ENCODE measurements at regions of chr22 and their contacts with region 1.

Region 1: GRCh38 chr22:41832553-41833368 is at the start of gene SREBF2:
- DNase-seq: peak; percentile 100
- H3K4me3 Mint-ChIP-seq: peak within 1 kb of the TSS; percentile 92
- H3K27ac Mint-ChIP-seq: peak within 1 kb of the TSS; percentile 96
- H3K4me1 Mint-ChIP-seq: peaks cover 50% of the 10 kb centered on the region
- H3K27me3 Mint-ChIP-seq: no peaks in the 10 kb centered on the region
- total RNA-seq, gene SREBF2: 150 to 157 TPM

Region 2: DNA sequence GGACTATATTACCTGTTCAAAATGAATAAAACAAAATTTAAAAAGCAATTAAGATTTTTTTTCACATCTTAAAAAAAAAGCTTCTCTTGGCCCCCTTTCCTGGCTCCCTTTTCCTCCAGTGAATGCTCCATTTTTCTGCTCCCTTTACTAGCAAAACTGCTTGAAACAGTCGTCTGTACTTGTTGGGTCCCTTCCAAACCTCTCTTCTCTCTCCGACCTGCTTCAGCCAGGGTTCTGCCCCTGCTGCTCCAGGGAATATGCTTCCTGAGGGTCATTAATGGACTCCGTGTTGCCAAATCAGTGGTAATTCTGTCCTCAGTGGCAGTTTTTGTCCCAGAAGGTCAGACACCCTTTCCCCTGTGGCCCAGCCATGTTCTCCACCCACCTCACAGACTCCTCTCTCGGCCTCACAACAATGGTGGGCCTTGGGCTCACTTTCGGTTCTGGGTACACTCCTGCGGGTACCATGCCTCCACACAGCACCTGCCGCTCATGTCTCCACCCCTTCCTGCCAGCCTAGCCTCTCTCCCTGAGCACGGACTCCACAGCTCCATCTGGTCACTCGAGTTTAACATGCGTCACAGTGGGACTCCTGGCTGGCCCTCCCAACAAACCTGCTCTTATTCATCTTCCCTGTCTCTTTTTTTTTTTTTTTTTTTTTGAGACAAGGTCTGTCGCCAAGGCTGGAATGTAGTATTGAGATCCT is 280.7 kb before region 1 on chr22:
- CTCF ChIA-PET with region 1: no interaction called
- POLR2A ChIA-PET with region 1: no interaction called
- DNase-seq: no peak
- H3K4me3 Mint-ChIP-seq: no peak overlapping the region
- H3K27ac Mint-ChIP-seq: no peak overlapping the region
- H3K4me1 Mint-ChIP-seq: peaks cover 2% of the 10 kb centered on the region
- H3K27me3 Mint-ChIP-seq: peaks cover 22% of the 10 kb centered on the region

Region 3: DNA sequence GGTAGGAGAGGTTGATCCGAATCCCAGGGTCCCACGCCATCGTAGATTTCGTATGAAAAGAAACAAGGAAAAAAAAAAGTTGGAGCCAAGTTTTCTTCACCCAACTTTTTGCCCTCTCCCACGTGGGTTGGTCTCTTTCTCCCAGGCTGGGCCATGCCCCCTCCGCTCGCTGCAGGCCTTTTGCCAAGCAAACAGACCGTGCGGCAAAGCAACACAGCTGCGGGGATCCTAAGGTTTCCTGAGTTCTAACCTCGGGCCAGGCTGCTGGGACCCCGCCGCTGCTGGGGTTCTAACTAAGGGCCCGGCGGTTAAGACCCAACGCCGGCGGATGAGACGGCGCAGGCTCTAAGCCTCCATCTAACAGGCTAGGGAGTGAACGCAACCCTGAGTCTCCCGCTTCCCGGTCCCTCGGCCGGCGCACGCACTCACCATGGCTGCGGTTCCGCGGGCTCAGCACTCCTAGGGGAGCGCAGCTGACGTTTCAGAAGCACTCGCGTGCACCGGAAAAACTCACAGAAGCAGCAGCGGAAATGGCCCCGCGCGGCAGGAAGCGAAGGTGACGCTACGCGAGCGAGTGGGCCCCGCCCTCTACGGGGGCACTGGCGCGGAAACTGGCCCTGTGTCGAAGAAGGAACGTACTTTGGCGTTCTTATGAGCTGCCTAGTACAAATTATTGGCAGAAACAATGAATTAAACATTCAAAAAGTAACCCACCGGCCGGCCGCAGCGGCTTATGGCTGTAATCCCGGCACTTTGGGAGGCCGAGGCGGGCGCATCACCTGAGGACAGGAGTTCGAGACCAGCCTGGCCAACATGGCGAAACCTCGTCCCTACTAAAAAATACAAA is 144.2 kb before region 1 on chr22 and contains the start of gene SNU13:
- CTCF ChIA-PET with region 1: no interaction called
- POLR2A ChIA-PET with region 1: interaction called, 21 read pairs
- DNase-seq: peak; percentile 95
- H3K4me3 Mint-ChIP-seq: peak within 1 kb of the TSS; percentile 95
- H3K27ac Mint-ChIP-seq: peak within 1 kb of the TSS; percentile 92
- H3K4me1 Mint-ChIP-seq: peaks cover 40% of the 10 kb centered on the region
- H3K27me3 Mint-ChIP-seq: no peaks in the 10 kb centered on the region
- total RNA-seq, gene SNU13: 166 to 176 TPM

Region 4: DNA sequence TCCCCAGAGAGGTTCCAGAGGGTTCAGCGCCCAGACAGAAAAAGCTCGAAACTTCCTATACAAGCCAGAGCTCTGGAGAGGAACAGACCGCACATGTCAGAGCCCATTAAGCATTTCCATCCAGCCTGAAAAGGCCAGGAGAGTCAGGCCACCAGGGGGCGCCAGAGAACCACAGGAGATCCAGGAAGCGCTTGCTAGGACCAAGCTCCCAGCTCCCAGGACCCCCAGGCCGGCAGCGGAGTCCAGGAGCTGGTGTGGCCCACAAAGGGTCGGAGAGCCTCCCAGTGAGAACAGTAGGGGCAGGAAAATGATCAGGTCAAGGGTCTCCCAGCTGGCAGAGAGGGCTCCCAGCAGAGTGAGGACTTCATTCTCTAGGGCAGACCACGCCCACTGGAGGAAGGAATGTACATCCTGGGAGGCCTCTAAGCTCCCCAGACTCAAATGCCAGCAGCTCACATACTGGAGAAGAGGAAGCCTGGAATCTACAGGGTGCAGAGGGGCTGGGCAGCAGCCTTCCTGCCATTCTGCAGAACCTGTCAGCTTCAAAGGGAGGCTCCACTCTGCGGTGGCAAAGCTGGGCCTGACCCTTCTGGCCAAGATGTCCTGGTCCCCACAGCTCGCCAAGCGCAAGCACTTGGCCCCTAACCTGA is 135.5 kb before region 1 on chr22:
- CTCF ChIA-PET with region 1: interaction called, 11 read pairs
- POLR2A ChIA-PET with region 1: interaction called, 10 read pairs
- DNase-seq: peak; percentile 91
- H3K4me3 Mint-ChIP-seq: no peak overlapping the region
- H3K27ac Mint-ChIP-seq: peak overlapping the region; percentile 68
- H3K4me1 Mint-ChIP-seq: peaks cover 18% of the 10 kb centered on the region
- H3K27me3 Mint-ChIP-seq: peaks cover 4% of the 10 kb centered on the region

Region 5: GRCh38 chr22:41780746-41781505 is 51.8 kb before region 1 on chr22:
- CTCF ChIA-PET with region 1: interaction called, 4 read pairs
- POLR2A ChIA-PET with region 1: interaction called, 66 read pairs
- DNase-seq: peak; percentile 96
- H3K4me3 Mint-ChIP-seq: peak overlapping the region; percentile 85
- H3K27ac Mint-ChIP-seq: peak overlapping the region; percentile 97
- H3K4me1 Mint-ChIP-seq: peaks cover 46% of the 10 kb centered on the region
- H3K27me3 Mint-ChIP-seq: no peaks in the 10 kb centered on the region

Region 6: DNA sequence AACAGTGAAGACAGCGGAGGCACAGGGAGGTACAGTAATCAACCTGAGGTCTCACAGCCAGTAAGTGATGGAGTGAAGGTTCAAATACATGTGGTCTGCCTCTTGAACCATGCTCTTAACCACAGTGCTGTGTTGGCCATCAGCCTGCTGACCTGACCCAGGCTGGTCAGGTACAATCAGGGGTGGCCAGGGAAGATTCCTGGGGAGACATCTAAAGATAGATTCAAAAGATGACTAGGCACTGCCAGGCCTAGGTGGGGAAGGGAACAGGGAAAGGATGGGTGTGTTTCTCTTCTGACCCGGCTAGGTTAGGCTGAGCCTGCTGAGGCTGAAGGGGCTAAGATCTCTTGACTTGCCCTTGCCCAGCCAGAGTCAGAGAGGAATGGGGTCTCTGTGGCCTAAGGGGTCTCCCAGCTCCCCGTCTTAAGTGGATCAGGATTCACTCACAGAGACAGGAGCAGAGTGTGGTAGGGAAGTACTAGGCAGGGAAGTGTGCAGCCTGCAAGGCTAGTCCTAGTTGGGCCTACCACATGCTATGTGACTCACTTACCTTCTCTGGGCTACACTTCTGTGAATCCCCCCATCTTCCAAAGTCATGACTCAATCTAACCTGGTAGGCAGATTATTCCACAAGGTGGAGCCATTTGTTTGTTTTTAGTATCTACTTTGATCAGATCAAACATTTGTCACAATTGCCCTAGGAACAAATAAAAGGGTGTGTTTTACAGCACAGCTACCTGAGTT is 10.3 kb before region 1 on chr22:
- CTCF ChIA-PET with region 1: interaction called, 10 read pairs
- POLR2A ChIA-PET with region 1: interaction called, 6 read pairs
- DNase-seq: no peak
- H3K4me3 Mint-ChIP-seq: no peak overlapping the region
- H3K27ac Mint-ChIP-seq: peak overlapping the region; percentile 58
- H3K4me1 Mint-ChIP-seq: peaks cover 22% of the 10 kb centered on the region
- H3K27me3 Mint-ChIP-seq: no peaks in the 10 kb centered on the region

Region 7: GRCh38 chr22:41873391-41873790 is 40.6 kb after region 1 on chr22:
- CTCF ChIA-PET with region 1: no interaction called
- POLR2A ChIA-PET with region 1: interaction called, 19 read pairs
- DNase-seq: no peak
- H3K4me3 Mint-ChIP-seq: no peak overlapping the region
- H3K27ac Mint-ChIP-seq: peak overlapping the region; percentile 73
- H3K4me1 Mint-ChIP-seq: peaks cover 15% of the 10 kb centered on the region
- H3K27me3 Mint-ChIP-seq: no peaks in the 10 kb centered on the region

Region 8: GRCh38 chr22:41957941-41958556 is 125.3 kb after region 1 on chr22:
- CTCF ChIA-PET with region 1: no interaction called
- POLR2A ChIA-PET with region 1: no interaction called
- DNase-seq: no peak
- H3K4me3 Mint-ChIP-seq: no peak overlapping the region
- H3K27ac Mint-ChIP-seq: no peak overlapping the region
- H3K4me1 Mint-ChIP-seq: peaks cover 4% of the 10 kb centered on the region
- H3K27me3 Mint-ChIP-seq: no peaks in the 10 kb centered on the region

Measured in activated CD4-positive, alpha-beta memory T cell treated with anti-CD3 and anti-CD28 coated beads, Interleukin-2, amount 10 ng/mL, durations not matched to agents 7 days and 5 days (primary cell).